Activated CD4-positive, alpha-beta T cell treated with anti-CD3 and anti-CD28 coated beads, Interleukin-2, amount 10 ng/mL, durations not matched to agents 7 days and 5 days (primary cell): ENCODE measurements at regions of chr1 and their contacts with region 1.

Region 1: DNA sequence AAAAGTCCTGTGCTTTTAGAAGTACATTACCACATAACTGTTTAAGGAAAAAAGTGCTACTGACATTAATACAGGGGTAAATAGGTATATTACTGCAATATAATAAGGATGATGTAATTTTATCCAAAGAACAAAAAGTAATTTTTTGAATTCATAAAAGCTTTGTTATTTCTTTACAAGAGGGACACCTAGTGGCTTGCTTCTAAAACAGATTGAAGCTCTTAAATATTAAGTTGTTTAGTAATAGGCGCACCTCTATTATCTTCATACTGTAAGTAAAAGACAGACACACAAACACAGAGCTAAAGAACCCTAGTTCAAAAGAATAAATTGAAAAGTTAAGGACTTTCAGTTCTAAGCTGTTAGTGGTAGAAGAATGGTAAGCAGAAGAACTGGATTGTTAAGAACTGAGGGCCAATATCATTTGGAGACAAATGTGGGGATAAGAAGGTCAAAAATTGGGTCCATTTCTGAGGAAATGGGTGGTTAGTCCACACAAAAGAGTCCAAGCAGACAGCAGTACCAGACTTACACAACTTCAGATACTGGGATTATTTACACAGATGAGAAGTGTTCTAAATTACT is 15.4 kb downstream of the ZNHIT6 start:
- DNase-seq: no peak
- H3K4me3 Mint-ChIP-seq: no peak overlapping the region
- H3K27ac Mint-ChIP-seq: no peak overlapping the region
- H3K4me1 Mint-ChIP-seq: no peaks in the 10 kb centered on the region
- H3K27me3 Mint-ChIP-seq: no peaks in the 10 kb centered on the region

Region 2: DNA sequence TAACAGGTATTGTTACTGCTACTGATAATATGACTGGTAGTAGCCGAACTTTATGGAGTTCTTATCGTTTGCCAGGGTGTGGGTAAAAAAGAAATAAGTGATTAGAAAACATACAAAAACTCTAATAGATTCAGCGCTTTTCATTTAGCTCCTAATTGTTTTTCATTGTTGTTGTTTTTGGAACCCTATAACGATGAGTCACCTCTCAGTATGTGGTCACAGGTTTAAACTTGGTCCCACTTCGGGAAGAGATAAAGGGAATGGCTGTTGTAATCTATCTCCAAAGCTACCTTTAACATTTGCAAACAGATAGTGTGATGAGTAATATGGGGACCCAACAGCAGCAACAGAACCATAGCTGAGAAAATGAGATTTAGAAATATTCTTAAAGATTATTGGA is 353.7 kb before region 1 on chr1:
- CTCF ChIA-PET with region 1: no interaction called
- POLR2A ChIA-PET with region 1: interaction called, 12 read pairs
- DNase-seq: no peak
- H3K4me3 Mint-ChIP-seq: no peak overlapping the region
- H3K27ac Mint-ChIP-seq: no peak overlapping the region
- H3K4me1 Mint-ChIP-seq: peaks cover 10% of the 10 kb centered on the region
- H3K27me3 Mint-ChIP-seq: peaks cover 49% of the 10 kb centered on the region

Region 3: GRCh38 chr1:85801520-85801919 is 108.7 kb after region 1 on chr1:
- CTCF ChIA-PET with region 1: no interaction called
- POLR2A ChIA-PET with region 1: no interaction called
- DNase-seq: no peak
- H3K4me3 Mint-ChIP-seq: no peak overlapping the region
- H3K27ac Mint-ChIP-seq: no peak overlapping the region
- H3K4me1 Mint-ChIP-seq: no peaks in the 10 kb centered on the region
- H3K27me3 Mint-ChIP-seq: no peaks in the 10 kb centered on the region